ENCODE measurements at regions of chr1 and their contacts with region 1.

Region 1: DNA sequence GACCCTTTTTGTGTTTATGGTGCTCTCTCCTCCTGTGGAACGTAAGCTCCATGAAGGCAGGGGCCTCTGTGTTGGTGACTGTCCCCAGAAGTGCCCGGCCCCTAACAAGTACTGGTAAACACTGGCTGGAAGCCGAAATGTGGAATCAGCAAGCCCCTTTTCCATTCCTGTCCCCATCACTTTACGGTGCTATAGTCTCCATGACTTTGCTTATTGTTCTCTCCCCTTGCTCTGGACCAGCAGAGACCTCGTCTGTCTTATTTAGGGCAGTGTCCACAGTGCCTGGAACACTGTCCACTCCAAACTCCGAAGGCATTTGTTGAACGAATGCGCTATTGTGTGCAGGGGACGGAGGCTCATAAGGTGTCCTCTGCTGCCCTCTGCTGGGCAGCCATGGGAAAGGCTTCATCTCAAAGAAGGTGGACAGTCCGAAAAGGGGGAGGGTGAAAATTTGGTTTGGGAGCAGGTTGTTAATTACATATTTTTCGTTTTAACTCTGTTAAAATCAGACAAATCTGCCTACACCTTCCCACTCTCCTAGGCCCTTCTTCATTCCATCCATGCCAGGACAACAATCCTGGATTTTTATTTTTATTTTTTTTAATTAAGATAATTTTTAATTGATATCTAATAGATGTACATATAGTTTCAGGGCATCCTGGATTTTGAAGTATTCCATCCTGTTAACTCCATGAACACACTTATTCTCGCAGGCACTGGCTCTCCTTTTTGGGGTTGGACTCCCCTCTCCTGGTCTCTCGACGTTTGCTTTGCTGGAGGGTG is 115.6 kb downstream of the PGBD5 start:
- DNase-seq: peak; percentile 82

Region 2: DNA sequence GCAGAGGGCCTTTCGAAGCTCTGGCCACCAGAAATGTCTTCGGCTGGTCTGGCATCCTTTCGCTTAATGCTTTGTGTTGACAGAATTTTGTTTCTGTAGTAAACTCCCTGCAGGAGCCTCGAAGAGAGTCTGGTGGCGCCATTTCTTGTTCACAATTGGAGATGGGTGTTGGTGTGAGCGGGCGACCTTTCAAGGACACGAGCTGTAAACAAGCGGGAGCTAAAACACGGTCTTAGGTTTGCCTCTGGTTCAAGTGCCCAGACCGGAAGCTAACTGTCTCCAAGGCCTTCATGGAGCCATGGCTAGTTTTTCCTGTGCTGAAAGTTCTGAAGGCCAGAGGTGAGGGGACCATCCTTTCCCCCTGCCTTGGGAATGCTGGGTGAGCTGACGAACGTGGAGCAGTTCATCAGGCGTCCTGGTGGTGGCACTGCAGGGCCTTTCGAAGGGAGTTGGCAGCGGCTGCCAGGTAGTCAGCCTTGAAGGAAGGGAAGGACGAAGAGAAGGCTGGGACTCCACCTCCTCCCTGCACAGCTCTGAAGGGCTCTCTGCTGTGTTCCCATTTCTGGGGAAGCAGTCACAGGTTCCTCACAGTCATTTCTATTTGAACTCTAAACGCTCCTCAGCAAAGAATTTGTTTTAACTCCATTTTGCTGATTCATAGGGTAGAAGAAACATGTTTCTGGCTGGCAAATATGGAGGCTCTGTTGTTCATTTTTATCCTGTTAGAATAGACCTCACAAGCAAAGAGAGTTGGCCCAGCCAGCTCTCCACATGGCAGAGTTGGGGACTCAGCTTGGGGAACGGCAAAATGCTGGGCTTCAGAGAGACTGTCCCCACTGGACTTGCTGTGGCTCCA is 649.3 kb before region 1 on chr1:
- intact Hi-C with region 1: loop called (anchors 1 kb)
- DNase-seq: peak; percentile 91

Region 3: DNA sequence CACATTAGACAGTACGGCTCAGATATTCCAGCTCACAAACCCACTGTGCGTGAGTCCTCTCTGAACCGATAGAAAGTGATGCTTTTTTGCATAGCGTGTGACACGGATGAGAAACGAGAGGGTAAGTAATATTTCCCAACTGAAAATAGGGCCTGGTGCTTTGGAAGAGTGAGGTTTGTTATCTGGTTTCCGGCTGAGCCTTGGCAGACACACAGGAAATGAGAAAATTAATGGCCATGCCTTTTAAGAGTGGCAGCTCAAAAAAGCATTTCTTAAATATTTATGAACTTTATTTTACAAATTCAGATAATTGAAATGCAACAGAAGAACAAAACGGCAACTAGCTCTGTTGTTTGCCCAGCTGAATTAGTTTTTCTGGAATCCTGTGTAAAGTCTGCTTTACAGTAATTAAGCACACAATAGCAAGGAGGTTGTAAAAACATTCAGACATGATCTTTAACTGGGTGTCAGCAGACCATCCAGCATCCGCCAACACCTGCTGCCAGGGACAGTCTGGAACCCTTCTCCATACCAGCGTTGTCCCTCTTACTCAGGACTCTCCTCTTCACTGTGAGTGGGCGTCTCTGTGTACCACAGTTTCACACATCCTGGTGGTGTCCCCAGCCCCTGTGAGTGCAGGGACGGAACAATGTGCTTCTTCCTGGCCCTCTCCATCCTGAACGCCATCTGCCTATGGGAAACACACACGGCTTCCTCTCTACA is 39.9 kb before region 1 on chr1:
- intact Hi-C with region 1: loop called (anchors 5 kb)
- DNase-seq: no peak

Measured in cardiac septum (tissue), 1 donor.